Activated CD4-positive, alpha-beta T cell treated with anti-CD3 and anti-CD28 coated beads, Interleukin-2, amount 10 ng/mL, durations not matched to agents 7 days and 5 days (primary cell): ENCODE measurements at regions of chr2 and their contacts with region 1.

Region 1: DNA sequence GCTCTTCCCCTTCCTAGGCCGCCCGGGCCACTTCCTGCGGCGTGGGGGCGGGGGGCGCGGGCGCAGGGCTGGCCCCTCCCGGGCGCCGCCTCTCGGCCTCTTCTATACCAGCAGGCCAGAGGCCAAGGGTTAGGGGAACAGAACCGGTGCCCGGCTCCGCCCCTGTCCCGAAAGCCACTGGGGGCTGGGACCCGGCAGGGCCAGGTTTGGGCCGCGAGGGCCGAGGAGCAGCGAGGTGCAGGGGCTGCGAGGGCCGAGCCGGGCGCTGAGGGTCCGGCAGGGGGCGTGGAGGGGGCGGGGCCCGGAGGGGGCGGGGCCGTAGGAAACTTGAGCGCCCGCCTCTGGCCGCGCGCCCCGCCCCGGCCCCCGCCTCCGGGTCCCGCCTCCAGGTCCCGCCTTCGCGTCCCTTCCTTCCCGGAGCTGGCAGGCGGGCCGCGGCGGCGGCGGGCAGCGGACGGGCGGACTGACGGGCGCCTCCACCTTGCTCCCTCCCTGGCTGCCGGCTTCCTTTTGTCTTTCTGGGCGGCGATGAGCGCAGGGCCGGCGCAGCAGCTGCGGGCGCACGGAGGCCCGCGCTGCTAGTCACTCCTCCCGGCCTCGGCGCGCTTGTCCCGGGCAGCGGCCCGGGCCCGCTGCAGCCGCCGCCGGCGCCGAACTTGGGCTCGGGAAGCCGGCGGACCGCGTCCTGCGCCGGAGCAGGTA is at the start of gene HPCAL1:
- DNase-seq: peak; percentile 81
- H3K4me3 Mint-ChIP-seq: peak within 1 kb of the TSS; percentile 97
- H3K27ac Mint-ChIP-seq: peak within 1 kb of the TSS; percentile 92
- H3K4me1 Mint-ChIP-seq: peaks cover 73% of the 10 kb centered on the region
- H3K27me3 Mint-ChIP-seq: no peaks in the 10 kb centered on the region
- total RNA-seq, gene HPCAL1: 61.6 to 63.6 TPM

Region 2: DNA sequence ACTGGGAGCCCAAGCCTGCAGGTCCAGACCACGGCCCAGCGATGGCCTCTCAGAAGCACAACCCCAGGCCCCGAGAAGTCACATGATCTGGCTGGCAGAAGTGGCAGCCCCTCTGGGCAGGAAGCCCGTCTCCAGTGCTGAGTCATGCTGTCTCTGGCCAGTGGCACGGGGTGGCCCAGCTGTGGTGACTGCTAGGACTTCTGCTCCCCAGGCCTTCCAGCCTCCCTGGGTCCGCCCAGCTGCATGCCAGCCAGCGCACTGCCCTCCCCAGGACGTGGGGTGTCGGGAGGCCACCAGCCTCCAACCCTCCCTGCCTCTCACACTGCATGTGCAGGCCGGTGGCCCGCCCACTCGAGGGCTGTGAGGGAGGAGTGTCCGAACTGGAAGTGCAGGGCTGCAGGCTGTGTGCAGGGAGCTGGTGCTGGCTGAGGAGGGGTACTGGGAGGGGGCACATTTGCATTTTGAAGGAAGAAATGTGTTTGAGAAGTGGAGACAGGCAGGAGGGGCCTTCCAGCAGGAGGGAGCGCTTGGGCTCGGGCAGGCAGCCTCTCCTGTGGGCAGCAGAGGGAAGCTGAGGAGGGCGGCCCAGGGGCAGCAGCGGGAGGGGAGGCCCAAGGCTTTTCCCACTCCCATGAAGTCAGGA is 17.0 kb before region 1 on chr2:
- CTCF ChIA-PET with region 1: interaction called, 12 read pairs
- POLR2A ChIA-PET with region 1: no interaction called
- DNase-seq: no peak
- H3K4me3 Mint-ChIP-seq: no peak overlapping the region
- H3K27ac Mint-ChIP-seq: no peak overlapping the region
- H3K4me1 Mint-ChIP-seq: peaks cover 8% of the 10 kb centered on the region
- H3K27me3 Mint-ChIP-seq: peaks cover 2% of the 10 kb centered on the region